ENCODE measurements at regions of chr1 and their contacts with region 1.

Region 1: GRCh38 chr1:109923131-109923945 is 12.7 kb downstream of the CSF1 start:
- DNase-seq: peak; percentile 34 to 87
- H3K4me3 ChIP-seq: no peak overlapping the region
- H3K27ac ChIP-seq: no peak overlapping the region
- H3K4me1 ChIP-seq: no peaks in the 10 kb centered on the region; a peak in 1 of 7 replicates
- H3K27me3 ChIP-seq: no peaks in the 10 kb centered on the region
- CTCF ChIP-seq: peak; percentile 87 to 92 (median 91)
- EP300 ChIP-seq: no peak
- POLR2A ChIP-seq: no peak
- RAD21 ChIP-seq: peak; percentile 78 to 88

Region 2: DNA sequence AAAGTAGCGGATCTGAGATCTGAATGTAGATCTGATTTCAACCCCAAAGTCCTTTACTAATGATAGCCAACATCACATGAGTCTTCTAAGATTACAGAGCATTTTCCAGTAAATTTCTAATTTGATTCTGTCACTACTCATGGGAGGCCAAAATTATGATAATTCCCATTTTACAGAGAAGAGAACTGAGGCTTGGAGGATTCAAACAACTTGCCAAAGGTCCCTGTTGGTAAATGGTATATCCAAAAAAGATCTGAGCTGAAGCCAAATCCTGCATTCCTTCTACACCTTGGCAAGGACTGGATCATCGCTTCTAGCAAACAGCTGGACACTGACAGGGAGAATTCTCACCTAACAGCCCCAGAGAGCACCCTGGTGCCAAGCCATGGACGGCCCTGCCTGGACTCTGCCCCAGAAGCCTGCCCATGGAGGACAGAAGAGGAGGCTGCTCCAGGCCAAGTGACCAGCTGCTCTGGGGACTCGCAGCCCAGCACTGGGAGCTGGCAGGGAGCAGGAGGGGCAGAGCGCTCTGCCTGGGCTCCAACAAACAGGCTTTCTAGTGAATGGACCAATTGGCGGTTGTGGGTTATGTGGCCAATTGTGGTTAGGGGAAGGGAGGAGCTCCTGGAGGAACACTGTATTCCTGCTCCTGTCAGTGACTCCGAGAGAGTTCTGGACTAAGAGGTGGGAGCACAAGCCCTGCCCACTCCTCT is 19.1 kb before region 1 on chr1:
- CTCF ChIA-PET with region 1: interaction called, 13 read pairs
- POLR2A ChIA-PET with region 1: interaction called, 3 read pairs
- DNase-seq: no peak
- H3K4me3 ChIP-seq: no peak overlapping the region
- H3K27ac ChIP-seq: no peak overlapping the region
- H3K4me1 ChIP-seq: peaks cover 0 to 3% (median 1%) of the 10 kb centered on the region in 4 experiments; a peak in 2 of 7 replicates
- H3K27me3 ChIP-seq: peaks cover 0 to 18% (median 12%) of the 10 kb centered on the region in 4 experiments; a peak in 6 of 7 replicates
- CTCF ChIP-seq: no peak
- EP300 ChIP-seq: no peak
- POLR2A ChIP-seq: no peak
- RAD21 ChIP-seq: no peak

Region 3: GRCh38 chr1:109910123-109910962 is 13.0 kb before region 1 on chr1 and contains the start of gene CSF1:
- CTCF ChIA-PET with region 1: interaction called, 94 read pairs
- POLR2A ChIA-PET with region 1: interaction called, 3 read pairs
- DNase-seq: peak in 1 of 2 experiments; percentile 62
- H3K4me3 ChIP-seq: peak within 1 kb of the TSS; percentile 47 to 69 (median 56)
- H3K27ac ChIP-seq: no peak within 1 kb of the TSS
- H3K4me1 ChIP-seq: peaks cover 2 to 25% (median 13%) of the 10 kb centered on the region in 4 experiments
- H3K27me3 ChIP-seq: peaks cover 7 to 47% (median 34%) of the 10 kb centered on the region in 4 experiments
- CTCF ChIP-seq: no peak
- EP300 ChIP-seq: no peak
- POLR2A ChIP-seq: no peak; a peak in 1 of 3 replicates
- RAD21 ChIP-seq: 0 out of 4 replicates have a peak, but pooled peaks of 1 of the 2 experiments have one; percentile 5
- total RNA-seq, gene CSF1: 2.0 and 3.3 TPM in 2 replicates

Region 4: GRCh38 chr1:110011527-110012041 is 88.2 kb after region 1 on chr1:
- CTCF ChIA-PET with region 1: interaction called, 16 read pairs
- POLR2A ChIA-PET with region 1: no interaction called
- DNase-seq: peak in 1 of 2 experiments; percentile 49
- H3K4me3 ChIP-seq: no peak overlapping the region
- H3K27ac ChIP-seq: no peak overlapping the region
- H3K4me1 ChIP-seq: peaks cover 0 to 9% (median 5%) of the 10 kb centered on the region in 4 experiments; a peak in 3 of 7 replicates
- H3K27me3 ChIP-seq: no peaks in the 10 kb centered on the region
- CTCF ChIP-seq: peak; percentile 5 to 68 (median 47)
- EP300 ChIP-seq: no peak
- POLR2A ChIP-seq: no peak
- RAD21 ChIP-seq: peak; percentile 67 to 74

Region 5: GRCh38 chr1:110068646-110069403 is 145.5 kb after region 1 on chr1:
- CTCF ChIA-PET with region 1: no interaction called
- POLR2A ChIA-PET with region 1: no interaction called
- DNase-seq: peak in 1 of 2 experiments; percentile 66
- H3K4me3 ChIP-seq: peak overlapping the region in 2 of 4 experiments; percentile 43 to 56; a peak in 5 of 8 replicates
- H3K27ac ChIP-seq: no peak overlapping the region
- H3K4me1 ChIP-seq: peaks cover 3 to 31% (median 15%) of the 10 kb centered on the region in 4 experiments; a peak in 6 of 7 replicates
- H3K27me3 ChIP-seq: peaks cover 62 to 93% (median 83%) of the 10 kb centered on the region in 4 experiments
- CTCF ChIP-seq: no peak
- EP300 ChIP-seq: no peak
- POLR2A ChIP-seq: no peak
- RAD21 ChIP-seq: no peak